PC-3 (cell line): ENCODE measurements at regions of chr6 and their contacts with region 1.

Region 1: GRCh38 chr6:27838058-27838944 is 73.9 kb downstream of the OR2B2 start:
- DNase-seq: peak; percentile 99
- ATAC-seq: peak; percentile 68
- H3K4me3 ChIP-seq: peak overlapping the region; percentile 85
- H3K27ac ChIP-seq: peak overlapping the region; percentile 93
- H3K4me1 ChIP-seq: peaks cover 17% of the 10 kb centered on the region
- H3K27me3 ChIP-seq: no peaks in the 10 kb centered on the region
- CTCF ChIP-seq: no peak

Region 2: GRCh38 chr6:27809939-27810767 is 28.1 kb before region 1 on chr6:
- CTCF ChIA-PET with region 1: no interaction called
- POLR2A ChIA-PET with region 1: interaction called, 9 read pairs
- intact Hi-C with region 1: loop called (anchors 1 kb)
- DNase-seq: peak; percentile 99
- ATAC-seq: peak; percentile 28
- H3K4me3 ChIP-seq: peak overlapping the region; percentile 76
- H3K27ac ChIP-seq: peak overlapping the region; percentile 65
- H3K4me1 ChIP-seq: peaks cover 28% of the 10 kb centered on the region
- H3K27me3 ChIP-seq: no peaks in the 10 kb centered on the region
- CTCF ChIP-seq: 0 out of 2 replicates have a peak, but pooled peaks have one; percentile 14

Region 3: GRCh38 chr6:27864906-27865849 is 26.9 kb after region 1 on chr6:
- CTCF ChIA-PET with region 1: no interaction called
- POLR2A ChIA-PET with region 1: interaction called, 31 read pairs
- intact Hi-C with region 1: loop called (anchors 1 kb)
- DNase-seq: peak; percentile 98
- ATAC-seq: peak; percentile 85
- H3K4me3 ChIP-seq: peak overlapping the region; percentile 74
- H3K27ac ChIP-seq: peak overlapping the region; percentile 35
- H3K4me1 ChIP-seq: peaks cover 21% of the 10 kb centered on the region
- H3K27me3 ChIP-seq: no peaks in the 10 kb centered on the region
- CTCF ChIP-seq: no peak

Region 4: GRCh38 chr6:28080631-28081485 is 242.6 kb after region 1 on chr6:
- CTCF ChIA-PET with region 1: no interaction called
- POLR2A ChIA-PET with region 1: no interaction called
- intact Hi-C with region 1: loop called (anchors 10 kb)
- DNase-seq: peak; percentile 96
- ATAC-seq: peak; percentile 84
- H3K4me3 ChIP-seq: peak overlapping the region; percentile 89
- H3K27ac ChIP-seq: peak overlapping the region; percentile 85
- H3K4me1 ChIP-seq: peaks cover 3% of the 10 kb centered on the region; the same call in 1 of the 2 replicates
- H3K27me3 ChIP-seq: no peaks in the 10 kb centered on the region
- CTCF ChIP-seq: no peak